Naive thymus-derived CD4-positive, alpha-beta T cell (primary cell): ENCODE measurements at regions of chr4 and their contacts with region 1.

Region 1: DNA sequence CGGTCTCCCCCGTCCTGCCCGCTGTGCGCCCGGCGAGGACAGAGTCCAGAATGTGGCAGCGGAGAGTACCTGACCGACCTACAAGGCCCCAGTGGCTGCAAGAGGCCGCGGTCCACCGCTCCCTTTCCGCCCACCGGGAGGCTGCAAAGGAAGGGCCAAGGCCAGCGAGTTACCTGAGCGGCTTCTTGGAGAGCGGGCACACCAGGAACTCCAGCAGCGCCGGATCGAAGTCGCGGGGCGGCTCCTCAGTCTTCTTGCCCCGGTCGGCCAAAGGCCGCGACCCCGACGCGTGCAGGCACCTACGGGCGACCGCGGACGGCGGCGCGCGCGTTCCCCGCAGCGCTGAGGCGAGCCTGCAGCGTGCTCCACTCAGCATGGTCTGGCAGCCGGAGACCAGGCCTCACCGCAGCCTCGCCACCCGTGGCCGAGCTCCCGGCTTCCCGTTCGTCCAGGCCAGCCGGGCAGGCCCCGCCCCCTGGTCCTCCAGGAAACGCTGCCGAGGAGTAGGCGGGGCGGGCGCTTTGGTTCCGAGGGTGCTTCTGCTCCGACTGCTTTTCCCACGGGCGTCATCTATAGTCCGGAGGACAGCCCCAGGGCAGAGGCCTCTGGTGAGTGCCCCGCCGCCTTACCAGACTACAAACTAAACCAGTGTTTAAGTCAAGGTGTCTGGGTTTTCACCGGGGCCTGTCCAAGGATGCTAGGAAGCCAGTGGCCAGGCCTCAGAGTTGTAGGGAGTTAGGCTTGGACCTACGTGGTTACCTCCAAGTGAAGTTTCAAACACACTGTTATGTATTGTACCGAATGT is at the start of gene PYURF:
- DNase-seq: peak; percentile 46 to 85 (median 50)
- ATAC-seq: peak; percentile 85
- H3K4me3 ChIP-seq: peak within 1 kb of the TSS; percentile 75
- H3K4me3 Mint-ChIP-seq: peak within 1 kb of the TSS; percentile 88 to 98 (median 92)
- H3K27ac ChIP-seq: peak within 1 kb of the TSS; percentile 79
- H3K27ac Mint-ChIP-seq: peak within 1 kb of the TSS; percentile 88 to 97 (median 93)
- H3K4me1 ChIP-seq: peaks cover 10 to 19% of the 10 kb centered on the region in 2 donors
- H3K4me1 Mint-ChIP-seq: peaks cover 0 to 56% (median 48%) of the 10 kb centered on the region in 7 donors
- H3K27me3 ChIP-seq: no peaks in the 10 kb centered on the region
- H3K27me3 Mint-ChIP-seq: no peaks in the 10 kb centered on the region
- total RNA-seq, gene PYURF: 33.0 to 57.7 (median 47.4) TPM

Region 2: GRCh38 chr4:87220094-87220822 is 1303.3 kb before region 1 on chr4 and contains the start of gene KLHL8:
- CTCF ChIA-PET with region 1: no interaction called
- POLR2A ChIA-PET with region 1: no interaction called
- intact Hi-C with region 1: loop called in 1 of 2 experiments (anchors 10 kb)
- DNase-seq: peak; percentile 82 to 94 (median 89)
- ATAC-seq: peak; percentile 97
- H3K4me3 ChIP-seq: peak within 1 kb of the TSS; percentile 97
- H3K4me3 Mint-ChIP-seq: peak within 1 kb of the TSS; percentile 73 to 99 (median 94)
- H3K27ac ChIP-seq: peak within 1 kb of the TSS; percentile 92
- H3K27ac Mint-ChIP-seq: peak within 1 kb of the TSS; percentile 71 to 95 (median 91)
- H3K4me1 ChIP-seq: peaks cover 0 to 8% of the 10 kb centered on the region in 2 donors
- H3K4me1 Mint-ChIP-seq: peaks cover 6 to 32% (median 17%) of the 10 kb centered on the region in 7 donors
- H3K27me3 ChIP-seq: no peaks in the 10 kb centered on the region
- H3K27me3 Mint-ChIP-seq: peaks cover 0 to 14% (median 0%) of the 10 kb centered on the region in 5 donors
- total RNA-seq, gene KLHL8: 10.9 to 15.7 (median 11.6) TPM

Region 3: DNA sequence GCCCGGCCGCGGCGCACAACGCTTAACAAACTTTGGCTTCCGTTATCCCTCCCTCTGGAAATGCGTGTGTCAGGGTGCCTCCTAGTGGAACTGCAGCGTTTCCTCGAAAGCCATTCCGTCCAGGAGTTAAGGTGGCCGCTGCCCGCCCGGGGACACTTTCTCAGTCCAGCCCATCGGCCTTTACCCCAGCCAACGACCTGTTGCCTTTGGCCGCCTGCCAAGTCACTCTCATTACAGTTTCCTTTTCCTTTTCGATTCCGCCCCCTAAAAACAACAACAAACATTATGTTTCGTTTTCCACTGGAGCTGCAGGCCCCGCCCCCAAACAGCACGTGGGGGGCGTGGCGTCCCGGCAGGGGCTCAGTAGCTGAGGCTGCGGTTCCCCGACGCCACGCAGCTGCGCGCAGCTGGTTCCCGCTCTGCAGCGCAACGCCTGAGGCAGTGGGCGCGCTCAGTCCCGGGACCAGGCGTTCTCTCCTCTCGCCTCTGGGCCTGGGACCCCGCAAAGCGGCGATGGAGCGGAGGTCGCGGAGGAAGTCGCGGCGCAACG is 66.7 kb before region 1 on chr4 and contains the start of gene HERC5:
- CTCF ChIA-PET with region 1: no interaction called
- POLR2A ChIA-PET with region 1: interaction called, 6 read pairs
- intact Hi-C with region 1: loop called (anchors 1 to 2 kb)
- DNase-seq: peak; percentile 90 to 94 (median 92)
- ATAC-seq: peak; percentile 98
- H3K4me3 ChIP-seq: peak within 1 kb of the TSS; percentile 100
- H3K4me3 Mint-ChIP-seq: peak within 1 kb of the TSS; percentile 87 to 100 (median 98)
- H3K27ac ChIP-seq: peak within 1 kb of the TSS; percentile 72
- H3K27ac Mint-ChIP-seq: peak within 1 kb of the TSS; percentile 94 to 100 (median 99)
- H3K4me1 ChIP-seq: peaks cover 5 to 6% of the 10 kb centered on the region in 2 donors
- H3K4me1 Mint-ChIP-seq: peaks cover 10 to 52% (median 37%) of the 10 kb centered on the region in 7 donors
- H3K27me3 ChIP-seq: no peaks in the 10 kb centered on the region
- H3K27me3 Mint-ChIP-seq: no peaks in the 10 kb centered on the region
- total RNA-seq, gene HERC5: 11.8 to 52.5 (median 14.1) TPM

Region 4: GRCh38 chr4:88613417-88613875 is 89.9 kb after region 1 on chr4:
- CTCF ChIA-PET with region 1: interaction called, 5 read pairs
- POLR2A ChIA-PET with region 1: interaction called, 3 read pairs
- intact Hi-C with region 1: loop called in 1 of 2 experiments (anchors 1 kb)
- DNase-seq: peak in 7 of 9 donors; percentile 71 to 91 (median 85)
- ATAC-seq: peak; percentile 94
- H3K4me3 ChIP-seq: peak overlapping the region; percentile 43
- H3K4me3 Mint-ChIP-seq: peak overlapping the region; percentile 64 to 92 (median 84)
- H3K27ac ChIP-seq: peak overlapping the region; percentile 77
- H3K27ac Mint-ChIP-seq: peak overlapping the region; percentile 91 to 99 (median 99)
- H3K4me1 ChIP-seq: peaks cover 28 to 55% of the 10 kb centered on the region in 2 donors
- H3K4me1 Mint-ChIP-seq: peaks cover 50 to 98% (median 86%) of the 10 kb centered on the region in 7 donors
- H3K27me3 ChIP-seq: no peaks in the 10 kb centered on the region
- H3K27me3 Mint-ChIP-seq: no peaks in the 10 kb centered on the region

Region 5: GRCh38 chr4:88792268-88792781 is 268.8 kb after region 1 on chr4:
- CTCF ChIA-PET with region 1: interaction called, 4 read pairs
- POLR2A ChIA-PET with region 1: no interaction called
- intact Hi-C with region 1: loop called (anchors 1 to 5 kb)
- DNase-seq: no peak
- ATAC-seq: peak; percentile 44
- H3K4me3 ChIP-seq: no peak overlapping the region
- H3K4me3 Mint-ChIP-seq: no peak overlapping the region
- H3K27ac ChIP-seq: no peak overlapping the region
- H3K27ac Mint-ChIP-seq: peak overlapping the region in 2 of 9 donors; percentile 3 to 60
- H3K4me1 ChIP-seq: no peaks in the 10 kb centered on the region
- H3K4me1 Mint-ChIP-seq: peaks cover 0 to 42% (median 4%) of the 10 kb centered on the region in 7 donors
- H3K27me3 ChIP-seq: no peaks in the 10 kb centered on the region
- H3K27me3 Mint-ChIP-seq: peaks cover 0 to 14% (median 0%) of the 10 kb centered on the region in 5 donors

Region 6: GRCh38 chr4:89024051-89024675 is 500.6 kb after region 1 on chr4:
- CTCF ChIA-PET with region 1: interaction called, 15 read pairs
- POLR2A ChIA-PET with region 1: no interaction called
- intact Hi-C with region 1: loop called (anchors 1 kb)
- DNase-seq: peak in 8 of 9 donors; percentile 33 to 80 (median 72)
- ATAC-seq: peak; percentile 99
- H3K4me3 ChIP-seq: no peak overlapping the region
- H3K4me3 Mint-ChIP-seq: no peak overlapping the region
- H3K27ac ChIP-seq: no peak overlapping the region
- H3K27ac Mint-ChIP-seq: no peak overlapping the region
- H3K4me1 ChIP-seq: no peaks in the 10 kb centered on the region
- H3K4me1 Mint-ChIP-seq: peaks cover 0 to 31% (median 6%) of the 10 kb centered on the region in 7 donors
- H3K27me3 ChIP-seq: no peaks in the 10 kb centered on the region
- H3K27me3 Mint-ChIP-seq: peaks cover 0 to 10% (median 0%) of the 10 kb centered on the region in 5 donors